HEK293 (cell line): ENCODE measurements at regions of chr19 and their contacts with region 1.

Region 1: GRCh38 chr19:33778089-33778791 is 18.4 kb upstream of the KCTD15 start:
- H3K4me3 ChIP-seq: no peak overlapping the region
- H3K27ac ChIP-seq: no peak overlapping the region
- H3K4me1 ChIP-seq: peaks cover 4% of the 10 kb centered on the region
- CTCF ChIP-seq: peak; percentile 100

Region 2: GRCh38 chr19:33430674-33431277 is 347.5 kb before region 1 on chr19:
- CTCF ChIA-PET with region 1: interaction called, 173 read pairs
- POLR2A ChIA-PET with region 1: no interaction called
- H3K4me3 ChIP-seq: no peak overlapping the region
- H3K27ac ChIP-seq: no peak overlapping the region
- H3K4me1 ChIP-seq: peaks cover 17% of the 10 kb centered on the region
- CTCF ChIP-seq: peak; percentile 98

Region 3: DNA sequence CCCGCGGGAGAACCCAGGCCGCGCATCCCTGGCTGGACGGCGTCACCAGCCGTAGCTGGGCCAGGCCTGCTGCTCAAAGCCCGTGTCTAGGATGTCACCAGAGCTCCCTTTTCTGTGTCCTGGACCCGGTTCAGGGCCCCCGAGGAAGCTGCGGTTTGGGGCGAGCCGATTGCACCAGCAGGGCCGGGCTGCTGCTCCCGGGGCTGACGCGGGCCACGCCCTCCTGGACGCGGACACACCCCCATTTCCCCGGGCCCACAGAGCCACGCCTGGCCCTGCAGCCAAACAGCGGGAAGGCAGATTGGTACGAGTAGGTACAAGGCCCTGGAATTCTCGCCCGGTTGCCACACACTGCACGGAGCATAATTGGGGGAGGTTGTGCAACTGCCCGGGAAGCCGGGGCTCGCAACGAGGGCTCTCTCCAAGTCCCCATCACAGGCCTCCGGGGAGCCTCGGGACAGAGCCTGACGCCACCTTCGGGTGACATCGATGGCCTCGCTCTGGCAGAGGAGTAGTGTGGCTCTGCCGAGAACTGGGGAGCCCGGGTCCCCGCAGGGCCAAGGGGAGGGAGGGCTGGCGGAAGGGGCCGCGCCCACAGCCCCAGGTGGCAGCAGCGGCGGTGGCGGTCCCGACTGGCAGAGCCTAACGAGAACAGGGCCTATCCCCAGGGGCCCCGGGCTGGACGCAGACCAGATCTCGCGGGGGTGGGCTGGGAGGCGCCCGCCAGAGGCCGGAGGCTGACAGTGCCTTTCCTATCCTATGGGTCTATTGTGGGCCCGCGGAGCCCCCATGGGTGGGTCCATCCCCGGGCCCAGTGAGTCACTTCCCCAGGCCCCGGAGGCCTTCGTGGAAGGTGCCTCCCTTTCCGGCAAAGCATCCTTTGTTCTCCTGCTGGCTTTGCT is 41.9 kb after region 1 on chr19:
- CTCF ChIA-PET with region 1: interaction called, 23 read pairs
- POLR2A ChIA-PET with region 1: interaction called, 4 read pairs
- H3K4me3 ChIP-seq: peak overlapping the region; percentile 18
- H3K27ac ChIP-seq: peak overlapping the region; percentile 74; the same call in 1 of the 2 replicates
- H3K4me1 ChIP-seq: peaks cover 19% of the 10 kb centered on the region
- CTCF ChIP-seq: peak; percentile 13

Region 4: GRCh38 chr19:33998739-33999345 is 220.6 kb after region 1 on chr19:
- CTCF ChIA-PET with region 1: interaction called, 58 read pairs
- POLR2A ChIA-PET with region 1: no interaction called
- H3K4me3 ChIP-seq: no peak overlapping the region
- H3K27ac ChIP-seq: no peak overlapping the region
- H3K4me1 ChIP-seq: 0 out of 2 replicates have a peak, but pooled peaks cover 4% of the 10 kb centered on the region
- CTCF ChIP-seq: peak; percentile 60

Region 5: DNA sequence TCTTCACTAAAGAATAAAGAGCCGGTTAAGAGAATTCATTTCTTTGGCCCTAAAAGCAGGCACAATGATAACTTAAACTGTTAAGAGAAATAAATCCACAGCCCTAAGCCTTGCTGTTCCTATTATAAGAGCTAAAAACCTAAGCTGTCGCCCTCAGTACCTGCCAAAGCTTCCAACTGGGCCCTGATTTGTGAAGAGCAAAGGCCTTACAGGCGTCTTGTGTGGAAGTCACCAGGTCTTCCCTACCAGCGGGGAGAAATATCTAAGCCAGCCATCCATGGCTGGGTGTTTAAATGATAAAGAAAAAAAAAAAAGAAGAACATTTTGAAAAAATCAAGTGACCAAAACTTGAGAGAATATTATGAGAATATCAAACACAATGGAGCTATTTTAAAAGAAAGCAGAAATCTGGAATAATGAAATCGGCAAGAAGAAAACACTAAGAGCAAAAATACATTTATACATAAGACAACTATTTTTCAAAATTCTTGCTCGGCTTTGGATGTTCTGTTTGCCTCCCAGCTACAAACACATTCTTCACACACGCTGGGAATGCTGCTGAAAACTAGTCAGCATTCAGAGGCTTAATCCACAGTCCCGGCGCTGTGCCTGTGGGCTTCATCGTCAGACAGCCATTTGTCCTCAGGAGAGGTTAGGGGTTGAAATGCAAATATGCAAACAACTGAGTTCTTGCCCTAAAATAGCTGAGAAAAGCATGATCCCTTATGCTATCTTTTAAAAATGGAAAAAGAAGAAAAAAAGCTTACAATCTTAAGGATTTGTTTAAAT is 304.2 kb after region 1 on chr19:
- CTCF ChIA-PET with region 1: interaction called, 51 read pairs
- POLR2A ChIA-PET with region 1: no interaction called
- H3K4me3 ChIP-seq: no peak overlapping the region
- H3K27ac ChIP-seq: no peak overlapping the region
- H3K4me1 ChIP-seq: no peaks in the 10 kb centered on the region
- CTCF ChIP-seq: no peak

Region 6: GRCh38 chr19:34145741-34146202 is 367.5 kb after region 1 on chr19:
- CTCF ChIA-PET with region 1: interaction called, 204 read pairs
- POLR2A ChIA-PET with region 1: no interaction called
- H3K4me3 ChIP-seq: no peak overlapping the region
- H3K27ac ChIP-seq: no peak overlapping the region
- H3K4me1 ChIP-seq: peaks cover 3% of the 10 kb centered on the region; the same call in 1 of the 2 replicates
- CTCF ChIP-seq: peak; percentile 93

Region 7: GRCh38 chr19:34712395-34713261 is 934.4 kb after region 1 on chr19:
- CTCF ChIA-PET with region 1: interaction called, 16 read pairs
- POLR2A ChIA-PET with region 1: no interaction called
- H3K4me3 ChIP-seq: no peak overlapping the region
- H3K27ac ChIP-seq: no peak overlapping the region
- H3K4me1 ChIP-seq: no peaks in the 10 kb centered on the region
- CTCF ChIP-seq: peak; percentile 91